ENCODE measurements at regions of chr9 and their contacts with region 1.

Region 1: GRCh38 chr9:95726756-95727155 is 148.7 kb upstream of the ERCC6L2 start:
- DNase-seq: no peak
- ATAC-seq: peak; percentile 65

Region 2: GRCh38 chr9:96217754-96218693 is 491.3 kb after region 1 on chr9:
- intact Hi-C with region 1: loop called (anchors 10 kb)
- DNase-seq: peak; percentile 87
- ATAC-seq: peak; percentile 97

Measured in Right ventricle myocardium superior (tissue), 1 donor.